ENCODE measurements at regions of chr11 and their contacts with region 1.

Region 1: GRCh38 chr11:35662649-35663407 is at the start of gene TRIM44:
- DNase-seq: peak; percentile 90
- H3K4me3 Mint-ChIP-seq: peak within 1 kb of the TSS; percentile 93
- H3K27ac Mint-ChIP-seq: peak within 1 kb of the TSS; percentile 92
- H3K4me1 Mint-ChIP-seq: peaks cover 45% of the 10 kb centered on the region
- H3K27me3 Mint-ChIP-seq: no peaks in the 10 kb centered on the region
- total RNA-seq, gene TRIM44: 35.0 to 37.8 TPM

Region 2: DNA sequence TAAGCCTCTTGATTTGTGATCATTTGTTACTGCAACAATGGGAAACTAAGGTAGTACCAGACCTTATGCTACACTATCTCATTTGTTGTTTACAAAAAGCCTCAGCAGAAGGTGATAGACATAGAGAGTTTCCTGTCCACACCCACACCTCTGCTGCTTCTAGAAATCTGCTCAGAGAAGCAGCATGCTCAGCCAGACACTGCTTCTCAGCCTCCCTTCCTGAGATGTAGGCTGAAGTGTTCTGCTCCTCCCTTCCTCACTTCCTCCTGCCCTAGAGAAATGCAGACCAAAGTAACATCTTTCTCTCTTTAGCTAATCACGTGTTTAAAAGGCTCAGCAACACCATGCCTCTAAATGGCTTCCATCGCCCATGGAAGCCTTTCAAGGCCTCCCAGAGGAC is 331.9 kb before region 1 on chr11:
- CTCF ChIA-PET with region 1: no interaction called
- intact Hi-C with region 1: loop called (anchors 2 kb)
- DNase-seq: peak; percentile 40
- H3K4me3 Mint-ChIP-seq: no peak overlapping the region
- H3K27ac Mint-ChIP-seq: no peak overlapping the region
- H3K4me1 Mint-ChIP-seq: peaks cover 47% of the 10 kb centered on the region
- H3K27me3 Mint-ChIP-seq: no peaks in the 10 kb centered on the region

Region 3: DNA sequence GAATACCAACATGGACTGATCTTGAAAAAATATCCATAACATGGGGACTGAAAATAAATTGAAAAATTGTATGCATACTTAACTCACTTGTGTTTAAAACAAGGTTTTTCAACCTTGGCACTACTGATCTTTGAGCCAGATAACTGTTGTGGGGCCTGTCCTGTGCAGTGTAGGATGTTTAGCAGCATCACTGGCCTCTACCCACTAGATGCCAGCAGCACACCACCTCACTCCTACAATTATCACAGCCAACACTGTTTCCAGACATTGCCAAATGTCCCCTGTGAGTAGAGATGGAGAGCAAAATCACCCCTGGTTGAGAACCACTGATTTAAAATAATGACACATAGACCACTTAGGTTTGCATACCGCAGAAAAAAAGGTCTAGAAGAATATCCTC is 198.5 kb before region 1 on chr11:
- CTCF ChIA-PET with region 1: no interaction called
- intact Hi-C with region 1: no loop called
- DNase-seq: peak; percentile 9
- H3K4me3 Mint-ChIP-seq: no peak overlapping the region
- H3K27ac Mint-ChIP-seq: no peak overlapping the region
- H3K4me1 Mint-ChIP-seq: no peaks in the 10 kb centered on the region
- H3K27me3 Mint-ChIP-seq: peaks cover 4% of the 10 kb centered on the region

Region 4: DNA sequence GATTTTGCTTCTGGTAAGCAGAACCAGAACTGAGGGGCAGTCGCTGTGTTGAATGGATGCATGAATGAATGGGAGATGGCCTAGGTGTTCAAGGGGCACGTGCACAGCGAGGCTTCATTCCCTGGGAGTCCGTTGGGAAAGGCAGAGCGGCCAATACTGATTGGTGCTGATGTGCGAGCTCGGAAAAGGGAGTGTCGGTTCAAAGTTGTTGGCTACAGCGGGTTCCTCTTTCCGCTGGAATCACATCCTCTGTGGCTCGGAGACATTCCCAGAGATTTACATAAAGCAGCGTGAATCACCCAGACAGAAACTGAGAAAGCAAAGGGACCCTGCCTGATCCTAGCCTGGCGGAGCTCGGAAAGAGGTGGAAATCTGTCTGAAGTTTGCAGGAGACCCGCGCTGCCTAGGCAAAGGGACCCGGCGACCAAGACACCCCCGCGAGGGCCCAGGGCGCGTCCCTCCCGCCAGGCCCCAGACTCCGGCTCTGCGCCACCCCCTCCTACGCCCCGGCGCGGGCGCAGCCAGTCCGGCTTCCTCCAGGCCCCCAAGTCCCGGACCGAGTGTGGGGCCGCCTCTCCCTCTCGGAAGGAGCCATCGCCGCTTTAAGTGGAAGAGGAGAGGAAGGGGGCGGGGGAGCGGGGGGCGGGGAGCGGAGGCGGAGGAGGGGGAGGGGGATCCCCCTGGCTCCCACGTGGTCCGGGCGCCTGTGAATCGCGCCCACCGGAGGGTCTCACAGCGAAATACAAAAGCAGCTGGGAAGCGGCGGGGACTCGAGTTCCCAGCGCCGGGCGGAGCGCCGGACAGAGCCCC is 44.9 kb before region 1 on chr11 and contains the start of gene FJX1:
- CTCF ChIA-PET with region 1: no interaction called
- intact Hi-C with region 1: loop called (anchors 1 kb)
- DNase-seq: peak; percentile 38
- H3K4me3 Mint-ChIP-seq: peak within 1 kb of the TSS; percentile 70
- H3K27ac Mint-ChIP-seq: no peak within 1 kb of the TSS
- H3K4me1 Mint-ChIP-seq: peaks cover 12% of the 10 kb centered on the region
- H3K27me3 Mint-ChIP-seq: peaks cover 48% of the 10 kb centered on the region
- total RNA-seq, gene FJX1: 0.77 to 0.98 TPM

Region 5: DNA sequence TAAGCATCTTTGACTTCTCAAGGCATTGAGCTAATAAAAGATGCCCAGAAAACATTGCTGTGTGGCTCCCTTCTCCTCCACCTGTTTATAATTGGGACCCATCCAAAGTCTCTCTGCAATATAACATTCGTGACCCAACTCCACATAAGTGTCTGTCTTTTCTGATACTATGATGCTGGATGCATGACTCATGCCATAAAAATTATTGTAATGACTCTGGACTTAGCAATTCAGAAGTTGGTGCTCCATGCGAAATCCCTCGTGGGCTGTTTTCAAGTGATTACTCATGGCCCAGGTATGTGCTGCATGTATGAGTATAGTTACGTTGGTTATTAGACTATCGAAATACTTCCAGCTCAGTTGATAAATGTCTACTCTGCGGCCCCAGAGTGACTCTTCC is 32.9 kb before region 1 on chr11:
- CTCF ChIA-PET with region 1: no interaction called
- intact Hi-C with region 1: no loop called
- DNase-seq: peak; percentile 5
- H3K4me3 Mint-ChIP-seq: no peak overlapping the region
- H3K27ac Mint-ChIP-seq: no peak overlapping the region
- H3K4me1 Mint-ChIP-seq: no peaks in the 10 kb centered on the region
- H3K27me3 Mint-ChIP-seq: peaks cover 43% of the 10 kb centered on the region

Region 6: GRCh38 chr11:35681163-35681767 is 18.4 kb after region 1 on chr11:
- CTCF ChIA-PET with region 1: interaction called, 3 read pairs
- intact Hi-C with region 1: loop called (anchors 2 kb)
- DNase-seq: no peak
- H3K4me3 Mint-ChIP-seq: no peak overlapping the region
- H3K27ac Mint-ChIP-seq: no peak overlapping the region
- H3K4me1 Mint-ChIP-seq: peaks cover 47% of the 10 kb centered on the region
- H3K27me3 Mint-ChIP-seq: no peaks in the 10 kb centered on the region

Region 7: GRCh38 chr11:35752115-35752514 is 89.3 kb after region 1 on chr11:
- CTCF ChIA-PET with region 1: no interaction called
- intact Hi-C with region 1: no loop called
- DNase-seq: no peak
- H3K4me3 Mint-ChIP-seq: no peak overlapping the region
- H3K27ac Mint-ChIP-seq: no peak overlapping the region
- H3K4me1 Mint-ChIP-seq: peaks cover under 1% of the 10 kb centered on the region
- H3K27me3 Mint-ChIP-seq: no peaks in the 10 kb centered on the region

Region 8: GRCh38 chr11:35785287-35786167 is 122.7 kb after region 1 on chr11:
- CTCF ChIA-PET with region 1: no interaction called
- intact Hi-C with region 1: loop called (anchors 2 kb)
- DNase-seq: peak; percentile 10
- H3K4me3 Mint-ChIP-seq: no peak overlapping the region
- H3K27ac Mint-ChIP-seq: no peak overlapping the region
- H3K4me1 Mint-ChIP-seq: peaks cover 48% of the 10 kb centered on the region
- H3K27me3 Mint-ChIP-seq: no peaks in the 10 kb centered on the region

Region 9: DNA sequence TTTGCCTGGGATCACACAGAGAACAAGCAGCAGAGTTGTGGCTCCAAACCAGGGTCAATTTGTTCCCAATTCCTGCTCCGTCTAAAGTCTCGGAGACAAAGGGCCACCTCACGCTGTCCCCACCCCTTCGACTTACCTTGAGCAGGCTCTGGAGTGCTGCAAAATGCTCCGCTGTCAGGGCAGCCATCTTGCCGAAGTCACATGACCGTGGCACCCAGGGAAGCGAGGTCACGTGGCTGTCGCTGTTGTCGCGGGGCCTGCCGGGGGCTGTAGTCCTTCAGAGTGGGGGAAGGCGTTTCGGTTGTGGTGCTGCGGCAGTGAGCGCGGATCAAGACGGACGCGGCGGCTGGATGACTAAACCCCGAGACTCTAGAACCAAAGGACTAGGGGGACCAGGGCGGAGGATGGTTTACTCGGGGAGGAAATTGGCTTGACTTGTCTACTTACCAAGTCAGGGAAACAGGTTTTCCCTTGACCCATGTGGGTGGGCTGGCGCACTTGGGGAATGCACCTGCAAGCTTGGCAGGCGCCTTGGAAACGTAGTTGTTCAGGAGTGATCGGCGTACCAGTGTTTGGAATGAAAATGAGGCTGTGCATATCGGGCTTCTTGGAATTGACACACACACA is 626.5 kb after region 1 on chr11 and contains the start of gene COMMD9:
- CTCF ChIA-PET with region 1: no interaction called
- intact Hi-C with region 1: loop called (anchors 1 kb)
- DNase-seq: peak; percentile 98
- H3K4me3 Mint-ChIP-seq: peak within 1 kb of the TSS; percentile 91
- H3K27ac Mint-ChIP-seq: peak within 1 kb of the TSS; percentile 78
- H3K4me1 Mint-ChIP-seq: peaks cover 34% of the 10 kb centered on the region
- H3K27me3 Mint-ChIP-seq: no peaks in the 10 kb centered on the region
- total RNA-seq, gene COMMD9: 28.9 to 30.9 TPM